Cardiac septum (tissue), 1 donor: ENCODE measurements at regions of chr13 and their contacts with region 1.

Region 1: DNA sequence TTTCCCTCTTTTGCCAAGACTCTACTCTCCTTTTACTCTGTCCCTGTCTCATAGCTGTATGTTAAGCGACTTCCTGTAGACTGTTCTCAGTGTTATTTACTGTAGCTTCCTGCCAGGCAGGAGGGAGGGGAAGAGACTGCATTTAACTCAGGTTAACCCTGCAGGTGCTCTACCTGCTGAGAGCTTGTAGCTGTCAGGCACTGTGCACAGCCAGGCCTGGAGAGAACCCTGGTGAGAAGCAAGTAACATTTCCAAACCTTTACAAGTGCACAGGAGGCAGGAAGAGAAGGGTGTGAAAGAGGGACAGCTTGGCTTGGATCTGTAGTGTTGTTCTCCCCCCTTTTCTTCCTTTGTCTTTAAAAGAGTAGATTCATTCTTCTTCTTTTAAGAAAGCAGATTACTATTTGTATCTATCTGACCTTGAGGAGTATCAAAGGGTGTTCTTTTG is 167.1 kb downstream of the LMO7 start:
- DNase-seq: no peak

Region 2: DNA sequence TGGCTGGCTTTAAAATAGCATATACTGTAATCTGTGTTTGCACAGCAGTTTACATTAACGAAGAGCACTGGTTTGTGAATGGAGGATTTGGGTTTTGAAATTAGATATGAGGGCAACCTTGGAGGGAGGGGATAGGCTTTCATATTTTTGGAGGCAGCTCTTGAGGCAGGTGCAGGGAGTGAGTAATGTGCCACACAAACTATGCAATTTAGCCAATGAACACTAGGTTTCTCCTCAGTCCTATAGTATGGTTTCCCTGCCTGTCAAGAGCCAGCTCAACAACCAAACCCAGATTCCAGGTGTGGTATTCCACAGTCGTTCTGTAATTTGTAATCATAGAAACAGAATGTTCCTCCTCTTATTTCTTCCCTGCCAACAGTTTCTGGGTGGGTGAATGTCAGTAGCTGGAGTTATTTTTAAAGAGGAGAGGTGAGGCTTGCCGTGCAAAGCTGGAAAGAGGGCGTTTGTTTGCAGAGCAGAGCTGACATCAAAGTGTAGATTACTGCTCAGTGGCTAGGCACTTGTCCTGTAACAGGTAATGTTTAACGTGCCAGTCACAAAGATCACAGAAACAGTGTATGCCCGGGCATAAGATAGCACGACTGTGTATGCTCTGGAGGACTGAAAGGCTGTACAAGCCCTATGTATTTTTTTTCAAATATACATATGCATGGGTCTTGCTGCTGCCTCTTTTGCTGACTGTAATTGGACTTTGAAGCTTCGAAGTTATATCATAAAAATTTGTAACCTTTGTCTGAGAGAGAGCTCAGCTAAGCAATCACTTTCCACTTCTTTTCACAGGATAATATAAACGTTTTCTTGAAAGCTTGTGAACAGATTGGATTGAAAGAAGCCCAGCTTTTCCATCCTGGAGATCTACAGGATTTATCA is 42.8 kb before region 1 on chr13:
- intact Hi-C with region 1: loop called (anchors 5 kb)
- DNase-seq: no peak

Region 3: GRCh38 chr13:75889427-75889826 is 86.2 kb after region 1 on chr13:
- intact Hi-C with region 1: no loop called
- DNase-seq: no peak